ENCODE measurements at regions of chr12 and their contacts with region 1.

Region 1: GRCh38 chr12:121793838-121794533 is 498 bp upstream of the RHOF start:
- DNase-seq: peak; percentile 82
- ATAC-seq: peak; percentile 71
- H3K4me3 ChIP-seq: peak overlapping the region; percentile 97
- H3K27ac ChIP-seq: peak overlapping the region; percentile 73
- H3K4me1 ChIP-seq: peaks cover 44% of the 10 kb centered on the region
- H3K27me3 ChIP-seq: no peaks in the 10 kb centered on the region
- CTCF ChIP-seq: peak; percentile 100; a peak in 5 of 6 replicates
- EP300 ChIP-seq: no peak
- POLR2A ChIP-seq: peak; percentile 73
- RAD21 ChIP-seq: peak; percentile 90

Region 2: DNA sequence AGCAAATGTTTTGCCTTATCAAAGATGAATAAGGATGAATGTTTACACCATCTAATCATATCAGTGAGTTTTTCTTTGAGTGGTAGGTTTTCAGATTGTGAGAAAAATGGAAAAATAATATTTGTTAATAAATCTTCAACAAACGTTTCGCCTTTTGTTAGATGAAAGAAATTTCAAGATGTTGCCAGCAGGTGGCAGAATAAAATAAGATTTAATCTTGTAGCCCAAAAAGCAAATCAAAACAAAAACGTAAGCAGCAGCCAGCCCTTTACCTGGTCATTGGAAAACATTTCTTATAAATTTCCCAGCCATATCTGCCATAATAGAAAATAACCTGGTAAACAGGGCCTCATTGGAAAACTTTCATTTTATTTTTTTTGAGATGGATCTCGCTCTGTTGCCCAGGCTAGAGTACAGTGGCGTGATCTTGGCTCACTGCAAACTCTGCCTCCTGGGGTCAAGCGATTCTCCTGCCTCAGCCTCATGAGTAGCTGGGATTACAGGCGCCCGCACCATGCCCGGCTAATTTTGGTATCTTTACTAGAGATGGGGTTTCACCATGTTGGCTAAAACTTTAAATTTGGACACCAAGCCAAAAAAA is 96.8 kb before region 1 on chr12:
- CTCF ChIA-PET with region 1: interaction called, 128 read pairs
- POLR2A ChIA-PET with region 1: interaction called, 3 read pairs
- RAD21 ChIA-PET with region 1: interaction called, 20 read pairs
- SMC1A ChIA-PET with region 1: interaction called, 15 read pairs
- in situ Hi-C with region 1: loop called (anchors 5 kb)
- intact Hi-C with region 1: loop called (anchors 1 kb)
- DNase-seq: no peak
- ATAC-seq: peak; percentile 40; the same call in 1 of the 3 replicates
- H3K4me3 ChIP-seq: no peak overlapping the region
- H3K27ac ChIP-seq: no peak overlapping the region
- H3K4me1 ChIP-seq: no peaks in the 10 kb centered on the region
- H3K27me3 ChIP-seq: no peaks in the 10 kb centered on the region
- CTCF ChIP-seq: peak in 2 of 3 experiments; percentile 35 to 60; a peak in 4 of 6 replicates
- EP300 ChIP-seq: no peak
- POLR2A ChIP-seq: no peak
- RAD21 ChIP-seq: peak; percentile 71

Region 3: DNA sequence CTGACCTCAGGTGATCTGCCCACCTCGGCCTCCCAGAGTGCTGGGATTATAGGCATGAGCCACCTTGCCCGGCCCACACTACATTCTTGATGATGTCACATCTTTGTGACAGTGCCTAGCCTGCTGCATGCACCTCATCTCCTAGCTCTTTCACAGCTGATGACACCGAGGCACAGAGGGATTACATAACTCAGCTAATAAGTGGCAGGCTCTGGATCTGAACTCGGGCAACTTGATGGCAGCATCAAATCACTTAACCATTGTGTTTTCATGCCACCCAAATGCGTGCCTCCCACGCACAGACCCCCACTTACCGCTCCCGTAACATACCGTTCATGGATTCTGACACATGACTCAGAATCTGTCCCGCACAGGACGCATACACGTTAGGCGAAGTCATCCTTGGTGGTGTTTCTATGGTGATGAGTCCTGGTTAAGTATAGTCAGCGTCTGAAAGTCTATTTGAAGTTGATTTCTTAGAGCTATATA is 74.0 kb before region 1 on chr12:
- CTCF ChIA-PET with region 1: interaction called, 18 read pairs
- POLR2A ChIA-PET with region 1: no interaction called
- RAD21 ChIA-PET with region 1: interaction called, 5 read pairs
- SMC1A ChIA-PET with region 1: no interaction called
- in situ Hi-C with region 1: no loop called
- intact Hi-C with region 1: no loop called
- DNase-seq: no peak
- ATAC-seq: no peak
- H3K4me3 ChIP-seq: no peak overlapping the region
- H3K27ac ChIP-seq: no peak overlapping the region
- H3K4me1 ChIP-seq: no peaks in the 10 kb centered on the region
- H3K27me3 ChIP-seq: no peaks in the 10 kb centered on the region
- CTCF ChIP-seq: no peak
- EP300 ChIP-seq: no peak
- POLR2A ChIP-seq: no peak
- RAD21 ChIP-seq: no peak

Region 4: GRCh38 chr12:121773011-121773777 is 20.8 kb before region 1 on chr12:
- CTCF ChIA-PET with region 1: interaction called, 492 read pairs
- POLR2A ChIA-PET with region 1: interaction called, 26 read pairs
- RAD21 ChIA-PET with region 1: interaction called, 230 read pairs
- SMC1A ChIA-PET with region 1: interaction called, 57 read pairs
- in situ Hi-C with region 1: no loop called
- intact Hi-C with region 1: loop called (anchors 1 kb)
- DNase-seq: no peak
- ATAC-seq: peak; percentile 91
- H3K4me3 ChIP-seq: no peak overlapping the region
- H3K27ac ChIP-seq: no peak overlapping the region
- H3K4me1 ChIP-seq: peaks cover 7% of the 10 kb centered on the region; the same call in 1 of the 2 replicates
- H3K27me3 ChIP-seq: no peaks in the 10 kb centered on the region
- CTCF ChIP-seq: peak; percentile 92 to 95 (median 94); a peak in 5 of 6 replicates
- EP300 ChIP-seq: no peak
- POLR2A ChIP-seq: no peak
- RAD21 ChIP-seq: peak; percentile 97

Region 5: GRCh38 chr12:121839106-121839992 is 45.4 kb after region 1 on chr12:
- CTCF ChIA-PET with region 1: interaction called, 33 read pairs
- POLR2A ChIA-PET with region 1: interaction called, 3 read pairs
- RAD21 ChIA-PET with region 1: interaction called, 8 read pairs
- SMC1A ChIA-PET with region 1: interaction called, 6 read pairs
- in situ Hi-C with region 1: no loop called
- intact Hi-C with region 1: no loop called
- DNase-seq: peak; percentile 86
- ATAC-seq: peak; percentile 100
- H3K4me3 ChIP-seq: peak overlapping the region; percentile 78
- H3K27ac ChIP-seq: peak overlapping the region; percentile 58
- H3K4me1 ChIP-seq: peaks cover 3% of the 10 kb centered on the region; the same call in 1 of the 2 replicates
- H3K27me3 ChIP-seq: no peaks in the 10 kb centered on the region
- CTCF ChIP-seq: peak in 1 of 3 experiments; percentile 20; a peak in 1 of 6 replicates
- EP300 ChIP-seq: no peak
- POLR2A ChIP-seq: peak; percentile 77
- RAD21 ChIP-seq: no peak

Region 6: DNA sequence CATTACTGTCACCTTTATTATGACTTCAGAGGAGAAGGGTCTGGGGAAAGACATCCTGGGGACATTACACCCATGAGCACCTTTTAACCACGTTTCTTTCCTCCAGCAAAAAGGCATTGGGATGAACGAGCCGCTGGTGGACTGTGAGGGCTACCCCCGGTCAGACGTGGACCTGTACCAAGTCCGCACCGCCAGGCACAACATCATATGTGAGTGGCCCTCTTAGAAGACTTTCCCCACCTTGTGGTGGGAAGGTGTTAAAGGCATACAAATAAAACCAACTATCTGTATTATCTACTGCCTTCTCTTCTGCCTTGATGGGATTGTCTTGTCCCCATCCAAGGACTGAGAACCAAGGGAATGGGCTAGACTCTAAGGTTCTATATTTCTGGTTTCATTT is 100.6 kb after region 1 on chr12:
- CTCF ChIA-PET with region 1: interaction called, 90 read pairs
- POLR2A ChIA-PET with region 1: interaction called, 3 read pairs
- RAD21 ChIA-PET with region 1: interaction called, 54 read pairs
- SMC1A ChIA-PET with region 1: interaction called, 36 read pairs
- in situ Hi-C with region 1: loop called (anchors 5 kb)
- intact Hi-C with region 1: no loop called
- DNase-seq: no peak
- ATAC-seq: peak; percentile 69
- H3K4me3 ChIP-seq: no peak overlapping the region
- H3K27ac ChIP-seq: no peak overlapping the region
- H3K4me1 ChIP-seq: peaks cover 5% of the 10 kb centered on the region; the same call in 1 of the 2 replicates
- H3K27me3 ChIP-seq: no peaks in the 10 kb centered on the region
- CTCF ChIP-seq: peak; percentile 22 to 31 (median 24); a peak in 3 of 6 replicates
- EP300 ChIP-seq: no peak
- POLR2A ChIP-seq: no peak
- RAD21 ChIP-seq: no peak

Measured in GM12878 (cell line).